HepG2 (cell line): ENCODE measurements at regions of chr2 and their contacts with region 1.

Region 1: DNA sequence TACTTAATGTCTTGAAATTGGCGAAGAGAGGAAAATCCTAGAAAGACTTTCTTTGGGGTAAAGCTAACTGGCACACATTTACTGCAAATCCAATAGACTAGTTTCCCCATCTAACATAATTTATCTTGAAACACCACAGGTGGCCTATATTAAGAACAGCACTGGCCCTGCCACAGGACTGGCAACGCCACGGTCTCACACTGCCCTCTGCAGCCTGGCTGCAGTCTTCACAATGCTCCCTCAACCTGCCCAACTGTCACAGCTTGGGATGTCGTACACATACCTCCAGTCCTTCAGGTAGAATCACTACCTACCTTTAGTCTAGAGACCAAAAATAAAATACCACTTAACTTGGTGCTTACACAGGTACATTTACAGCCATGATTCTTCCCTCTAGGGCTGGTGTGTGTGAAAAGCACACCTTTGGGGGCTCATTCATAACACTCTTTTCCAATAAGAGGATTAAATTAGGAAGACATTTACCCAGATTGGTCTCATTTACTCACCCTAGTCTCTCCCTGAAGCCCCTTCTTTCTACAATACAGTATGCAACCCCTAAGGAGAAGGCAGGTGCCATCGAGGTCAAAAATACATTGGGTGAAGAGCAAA is 222.2 kb downstream of the C1D start:
- DNase-seq: peak; percentile 43
- ATAC-seq: peak; percentile 100
- H3K4me3 ChIP-seq: no peak overlapping the region
- H3K27ac ChIP-seq: no peak overlapping the region
- H3K4me1 ChIP-seq: no peaks in the 10 kb centered on the region
- H3K27me3 ChIP-seq: no peaks in the 10 kb centered on the region
- CTCF ChIP-seq: peak; percentile 92
- EP300 ChIP-seq: no peak
- POLR2A ChIP-seq: no peak
- RAD21 ChIP-seq: peak; percentile 80

Region 2: DNA sequence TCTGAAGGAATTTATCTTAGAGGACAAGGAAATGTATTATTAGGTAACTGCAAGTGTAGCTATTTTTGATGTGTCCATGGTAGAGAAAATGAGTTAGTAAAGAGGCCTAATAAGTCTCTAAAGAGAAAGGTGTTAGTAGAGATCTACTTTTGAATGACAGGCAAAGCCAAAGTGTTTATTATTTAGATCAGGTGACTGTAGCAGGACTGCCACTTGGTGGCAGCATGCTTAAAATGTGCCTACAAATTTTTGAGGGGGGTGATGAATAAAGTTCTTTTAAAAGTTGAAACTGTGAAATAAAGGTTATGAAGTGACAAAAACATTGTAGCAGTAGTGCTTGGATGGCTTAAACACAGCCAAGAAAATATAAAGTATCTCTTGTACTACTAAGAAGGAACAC is 1827.1 kb before region 1 on chr2:
- CTCF ChIA-PET with region 1: no interaction called
- POLR2A ChIA-PET with region 1: no interaction called
- in situ Hi-C with region 1: no loop called
- intact Hi-C with region 1: loop called (anchors 10 kb)
- DNase-seq: peak; percentile 20
- ATAC-seq: no peak
- H3K4me3 ChIP-seq: no peak overlapping the region
- H3K27ac ChIP-seq: no peak overlapping the region
- H3K4me1 ChIP-seq: no peaks in the 10 kb centered on the region
- H3K27me3 ChIP-seq: no peaks in the 10 kb centered on the region
- CTCF ChIP-seq: peak; percentile 32; the same call in 1 of the 2 replicates
- EP300 ChIP-seq: no peak
- POLR2A ChIP-seq: no peak
- RAD21 ChIP-seq: no peak

Region 3: DNA sequence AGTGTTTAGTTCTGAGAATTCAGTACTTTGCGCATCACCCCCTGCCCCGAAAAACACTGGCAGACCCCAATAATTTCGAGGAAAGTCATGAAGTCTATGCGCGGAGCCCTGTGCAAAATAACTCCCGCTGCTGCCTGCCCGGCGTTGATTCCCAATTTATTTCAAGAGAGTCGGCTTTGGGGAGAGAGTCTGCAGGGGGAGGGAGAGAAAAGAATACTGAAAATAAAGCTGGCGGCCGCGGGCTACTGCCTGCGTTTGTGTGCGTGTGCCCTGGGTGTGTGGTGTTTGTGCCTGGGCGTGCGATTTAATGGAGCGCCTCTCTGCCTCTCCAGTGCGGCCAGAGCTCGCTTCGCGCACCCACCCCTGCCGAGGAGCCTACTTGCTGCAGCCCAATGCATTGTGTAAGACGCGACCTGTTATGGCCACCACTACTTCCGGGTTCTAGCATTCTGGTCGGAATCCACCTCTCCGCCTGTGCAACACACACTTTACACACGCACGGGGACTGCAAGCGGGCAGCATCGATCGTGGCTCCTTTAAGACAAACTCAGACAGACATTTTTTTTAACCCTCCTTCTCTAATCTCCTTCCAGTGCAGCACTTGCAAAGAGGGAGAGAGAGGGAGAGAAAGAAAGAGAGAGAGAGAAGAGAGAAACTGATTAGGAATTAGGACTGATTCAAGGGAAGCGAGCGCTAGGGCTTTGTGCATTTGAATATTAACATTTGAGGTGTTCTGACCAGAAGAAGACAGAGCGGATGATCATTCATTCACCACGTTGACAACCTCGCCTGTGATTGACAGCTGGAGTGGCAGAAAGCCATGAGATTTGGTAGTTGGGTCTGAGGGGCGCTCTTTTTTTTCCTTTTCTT is 1405.7 kb before region 1 on chr2 and contains the start of gene MEIS1:
- CTCF ChIA-PET with region 1: no interaction called
- POLR2A ChIA-PET with region 1: interaction called, 3 read pairs
- in situ Hi-C with region 1: loop called (anchors 10 kb)
- intact Hi-C with region 1: no loop called
- DNase-seq: peak; percentile 91
- ATAC-seq: peak; percentile 90
- H3K4me3 ChIP-seq: peak within 1 kb of the TSS; percentile 71 to 93 (median 85)
- H3K27ac ChIP-seq: peak within 1 kb of the TSS; percentile 72
- H3K4me1 ChIP-seq: peaks cover 19% of the 10 kb centered on the region
- H3K27me3 ChIP-seq: peaks cover 0 to 11% of the 10 kb centered on the region in 2 experiments; a peak in 3 of 5 replicates
- CTCF ChIP-seq: peak; percentile 38
- EP300 ChIP-seq: peak; percentile 35 to 60; a peak in 2 of 4 replicates
- POLR2A ChIP-seq: peak; percentile 95 to 96
- RAD21 ChIP-seq: no peak
- total RNA-seq, gene MEIS1: 4.5 and 6.0 TPM in 2 replicates

Region 4: DNA sequence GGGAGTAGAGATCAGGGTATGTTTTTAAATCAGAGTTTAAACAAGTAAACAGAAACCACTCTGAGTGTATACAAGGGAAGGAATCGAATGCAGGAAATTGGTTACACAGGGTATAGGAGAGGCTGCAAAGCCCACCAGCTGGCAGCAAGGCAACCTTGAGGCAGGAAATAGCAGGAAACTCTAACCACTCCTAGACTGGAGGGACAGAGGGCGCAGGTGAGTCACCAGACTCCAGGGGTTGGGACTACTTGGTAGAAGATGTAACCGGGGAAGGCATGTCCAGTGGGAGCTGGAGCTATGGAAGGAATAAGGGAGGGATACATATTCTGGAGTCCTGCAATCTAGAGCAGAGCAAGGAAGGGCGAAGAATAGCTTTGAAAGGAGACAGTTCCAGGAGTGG is 1253.3 kb before region 1 on chr2:
- CTCF ChIA-PET with region 1: no interaction called
- POLR2A ChIA-PET with region 1: no interaction called
- in situ Hi-C with region 1: loop called (anchors 25 kb)
- intact Hi-C with region 1: loop called (anchors 1 kb)
- DNase-seq: peak; percentile 52
- ATAC-seq: peak; percentile 97
- H3K4me3 ChIP-seq: no peak overlapping the region
- H3K27ac ChIP-seq: no peak overlapping the region
- H3K4me1 ChIP-seq: no peaks in the 10 kb centered on the region
- H3K27me3 ChIP-seq: peaks cover 1 to 16% of the 10 kb centered on the region in 2 experiments; a peak in 3 of 5 replicates
- CTCF ChIP-seq: peak; percentile 77
- EP300 ChIP-seq: no peak
- POLR2A ChIP-seq: no peak
- RAD21 ChIP-seq: peak; percentile 69

Region 5: DNA sequence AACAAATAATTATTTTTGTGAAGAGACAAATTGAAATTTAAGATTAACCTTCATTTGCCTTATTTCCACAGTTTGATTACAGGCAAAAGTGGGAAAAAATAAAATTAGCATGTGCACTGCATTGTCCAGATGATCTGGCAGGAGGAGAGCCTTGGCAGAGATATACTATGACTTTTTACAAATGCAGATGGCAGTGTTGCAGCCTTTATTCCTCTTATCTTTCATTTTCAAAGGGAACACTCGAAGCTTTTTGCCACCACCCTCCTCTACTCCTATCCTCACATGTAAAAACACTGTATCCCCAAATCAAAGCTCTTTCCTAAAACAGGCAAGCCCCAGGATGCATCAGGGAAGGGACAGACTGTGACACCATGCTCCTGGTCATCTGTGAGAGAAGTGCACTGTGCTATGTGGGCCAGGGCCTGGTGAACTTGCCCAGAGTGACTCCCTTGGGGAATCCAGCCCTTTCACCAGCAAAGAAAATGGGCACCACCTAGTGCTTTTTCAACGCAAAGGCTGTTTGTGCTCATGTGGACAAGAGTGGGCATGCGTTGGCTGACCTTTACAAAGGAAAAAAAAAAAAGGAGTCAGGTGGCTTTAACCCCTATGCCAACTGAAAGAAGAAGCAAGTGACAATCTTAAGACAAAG is 518.1 kb before region 1 on chr2:
- CTCF ChIA-PET with region 1: no interaction called
- POLR2A ChIA-PET with region 1: no interaction called
- in situ Hi-C with region 1: no loop called
- intact Hi-C with region 1: loop called (anchors 2 kb)
- DNase-seq: peak; percentile 65
- ATAC-seq: peak; percentile 100
- H3K4me3 ChIP-seq: no peak overlapping the region
- H3K27ac ChIP-seq: no peak overlapping the region
- H3K4me1 ChIP-seq: no peaks in the 10 kb centered on the region
- H3K27me3 ChIP-seq: no peaks in the 10 kb centered on the region
- CTCF ChIP-seq: peak; percentile 83
- EP300 ChIP-seq: no peak
- POLR2A ChIP-seq: no peak
- RAD21 ChIP-seq: peak; percentile 75

Region 6: DNA sequence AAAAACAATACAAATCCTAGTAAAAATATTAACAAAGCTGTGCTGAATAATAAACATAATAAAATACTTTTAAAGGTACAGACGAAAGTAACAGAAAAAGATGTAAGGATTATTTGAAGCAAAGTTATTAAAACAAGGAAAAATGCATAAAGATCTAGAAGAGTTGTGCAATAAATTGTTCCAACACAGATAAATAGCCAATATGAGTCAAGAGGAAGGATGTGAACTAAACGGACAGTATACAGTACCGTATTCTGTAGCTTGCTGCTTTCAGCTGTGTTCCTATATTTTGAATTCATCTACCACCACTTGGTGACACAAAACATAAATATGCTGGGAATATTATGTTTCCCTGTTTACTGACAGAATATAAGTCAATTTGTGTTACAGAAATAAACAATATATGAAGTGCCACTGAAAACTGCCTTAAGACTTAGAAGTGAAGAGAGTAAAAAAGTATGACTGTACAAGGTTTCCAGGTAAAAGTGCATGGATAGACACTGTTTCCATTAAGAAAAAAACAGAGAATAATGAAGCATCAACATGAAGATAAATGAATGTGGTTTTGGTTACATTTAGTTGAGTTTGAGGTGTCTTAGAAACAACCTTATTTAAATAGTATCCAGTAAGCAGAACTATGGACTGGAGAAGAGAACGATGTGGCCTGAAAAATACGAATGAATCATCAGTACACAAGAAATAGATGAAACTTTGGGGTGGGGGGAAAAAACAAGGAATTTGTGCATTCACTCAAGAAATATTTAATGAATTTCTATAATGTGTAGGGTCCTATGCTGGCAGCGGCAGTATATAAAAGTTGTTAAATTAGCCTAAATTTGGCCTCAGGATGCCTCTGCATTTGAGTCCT is 398.6 kb after region 1 on chr2:
- CTCF ChIA-PET with region 1: no interaction called
- POLR2A ChIA-PET with region 1: no interaction called
- in situ Hi-C with region 1: no loop called
- intact Hi-C with region 1: no loop called
- DNase-seq: no peak
- ATAC-seq: no peak
- H3K4me3 ChIP-seq: no peak overlapping the region
- H3K27ac ChIP-seq: no peak overlapping the region
- H3K4me1 ChIP-seq: 0 out of 2 replicates have a peak, but pooled peaks cover 26% of the 10 kb centered on the region
- H3K27me3 ChIP-seq: no peaks in the 10 kb centered on the region
- CTCF ChIP-seq: no peak
- EP300 ChIP-seq: no peak
- POLR2A ChIP-seq: no peak
- RAD21 ChIP-seq: no peak